ENCODE measurements at regions of chr20 and their contacts with region 1.

Region 1: DNA sequence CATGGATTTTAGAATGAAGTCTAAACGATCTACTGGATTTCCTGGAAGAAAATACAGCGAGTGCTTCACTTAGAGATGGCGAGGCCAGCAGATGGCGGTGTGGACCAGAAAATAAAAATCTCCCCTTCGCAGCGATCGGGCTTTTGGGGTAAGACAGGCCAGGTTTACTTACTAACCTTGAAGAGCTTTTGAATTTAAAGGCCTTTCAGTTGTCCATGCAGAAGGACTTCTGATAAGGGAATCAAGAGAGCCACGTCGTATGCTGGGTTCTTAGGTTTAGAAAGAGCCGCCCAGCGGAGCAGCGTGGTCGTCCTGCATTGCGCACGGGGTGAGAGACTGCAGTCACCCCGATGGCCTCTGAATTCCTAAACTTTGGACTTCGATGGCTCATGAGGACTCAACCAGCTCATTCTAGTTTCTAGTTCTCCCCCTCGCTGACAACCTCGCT is 125.2 kb upstream of the RALGAPA2 start:
- DNase-seq: peak; percentile 51
- ATAC-seq: peak; percentile 57 to 73

Region 2: GRCh38 chr20:20691477-20692235 is 145.9 kb before region 1 on chr20:
- intact Hi-C with region 1: no loop called
- DNase-seq: no peak
- ATAC-seq: no peak

Region 3: DNA sequence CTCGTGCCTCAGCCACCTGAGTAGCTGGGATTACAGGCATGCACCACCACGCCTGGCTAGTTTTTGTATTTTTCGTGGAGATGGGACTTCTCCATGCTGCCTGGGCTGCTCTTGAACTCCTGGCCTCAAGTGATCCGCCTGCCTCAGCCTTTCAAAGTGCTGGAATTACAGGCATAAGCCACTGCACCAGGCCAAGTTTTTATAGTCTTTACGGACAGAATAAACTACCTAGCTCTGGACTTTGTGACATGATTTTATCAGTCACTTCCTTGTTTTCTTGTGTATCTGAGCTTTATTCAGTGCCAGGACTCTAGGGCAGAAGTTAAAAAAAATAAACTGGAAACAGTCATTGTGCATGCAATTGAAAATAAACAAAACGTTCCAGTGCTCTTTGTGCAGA is 78.5 kb before region 1 on chr20:
- intact Hi-C with region 1: no loop called
- DNase-seq: no peak
- ATAC-seq: peak in 1 of 2 donors; percentile 14

Region 4: GRCh38 chr20:20802328-20802727 is 35.3 kb before region 1 on chr20:
- intact Hi-C with region 1: no loop called
- DNase-seq: peak; percentile 42
- ATAC-seq: peak; percentile 47 to 64

Region 5: DNA sequence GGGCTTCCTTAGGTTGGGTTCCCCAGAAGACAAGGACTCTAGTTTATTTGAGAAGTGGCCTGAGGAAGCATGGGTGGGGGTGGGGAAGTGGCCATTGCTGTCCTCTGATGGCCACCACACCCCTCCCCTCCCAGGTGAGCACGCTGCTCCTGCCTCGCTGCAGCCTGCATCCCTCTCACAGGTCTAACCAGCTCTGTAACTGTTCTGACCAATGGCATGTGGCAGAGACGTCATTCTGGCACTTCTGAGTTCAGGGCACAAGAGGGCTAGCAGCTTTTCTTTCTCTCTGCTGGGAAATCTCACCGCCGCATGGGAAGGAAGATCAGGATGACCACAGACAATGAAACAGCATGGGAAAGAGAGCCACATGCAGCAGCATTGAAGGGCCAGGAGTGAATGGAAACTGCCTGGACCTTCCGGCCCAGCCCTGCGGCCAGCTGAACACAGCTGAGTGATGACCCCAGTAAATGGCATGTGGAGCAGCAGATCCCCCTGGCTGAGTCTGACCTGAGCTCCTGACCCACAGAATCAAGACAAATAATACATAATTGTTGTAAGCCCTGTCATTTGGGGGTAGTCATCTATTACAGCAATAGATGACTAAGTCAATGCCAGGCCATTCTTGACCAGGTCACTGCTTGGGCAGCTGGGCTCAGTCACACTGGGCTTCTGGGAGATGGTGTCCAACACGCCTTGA is 88.8 kb after region 1 on chr20:
- intact Hi-C with region 1: no loop called
- DNase-seq: no peak
- ATAC-seq: no peak

Region 6: GRCh38 chr20:21615617-21616080 is 778.1 kb after region 1 on chr20:
- intact Hi-C with region 1: loop called in 1 of 2 experiments (anchors 10 kb)
- DNase-seq: peak; percentile 33
- ATAC-seq: peak; percentile 50 to 73

Measured in left cardiac atrium (tissue), 4 donors.